ENCODE measurements at regions of chr1 and their contacts with region 1.

Region 1: DNA sequence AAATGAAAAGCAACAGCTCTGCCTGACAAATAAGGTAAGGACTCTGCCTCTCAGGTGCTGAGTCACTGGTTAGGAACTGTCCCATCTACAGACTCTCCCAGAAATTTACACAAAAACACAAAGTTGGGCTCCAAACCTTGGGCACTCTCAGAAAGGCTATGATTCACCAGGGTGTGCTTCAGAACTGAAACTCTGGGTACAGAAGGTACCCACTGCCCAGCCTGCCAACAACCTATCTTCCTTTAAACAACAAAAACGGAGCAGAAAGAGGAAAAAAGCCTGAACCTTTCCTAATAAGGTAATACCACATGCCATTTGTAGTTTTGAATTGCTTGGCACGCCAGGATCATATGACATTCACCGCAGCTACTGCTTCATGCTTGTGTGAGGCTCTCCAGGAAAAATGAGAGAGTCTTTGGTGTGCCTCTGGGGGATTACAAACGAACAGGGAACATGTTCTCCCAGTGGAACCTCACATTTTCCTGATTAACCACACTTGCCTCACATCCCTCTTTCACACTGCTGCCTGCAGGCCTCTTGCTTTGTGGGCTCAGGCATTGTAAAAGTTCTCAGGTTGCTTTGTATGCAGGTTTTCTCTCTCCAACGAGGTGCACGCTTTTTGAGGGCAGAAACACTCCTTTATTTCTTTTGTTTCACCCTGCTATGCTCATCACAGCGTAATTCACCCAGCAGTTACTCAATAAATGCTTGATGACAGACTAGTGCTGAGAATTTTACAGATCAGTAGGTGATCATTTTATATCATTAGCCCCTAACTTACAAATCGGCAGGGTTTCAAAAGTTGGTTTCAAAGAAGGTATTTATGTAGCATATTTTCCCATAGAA is 65.1 kb downstream of the GADD45A start:
- DNase-seq: peak; percentile 80 to 87
- H3K4me3 ChIP-seq: no peak overlapping the region
- CTCF ChIP-seq: no peak
- POLR2A ChIP-seq: no peak

Region 2: GRCh38 chr1:67685067-67685557 is 65.0 kb before region 1 on chr1 and contains the start of gene GADD45A:
- intact Hi-C with region 1: loop called (anchors 10 kb)
- DNase-seq: peak; percentile 99 to 100
- H3K4me3 ChIP-seq: peak within 1 kb of the TSS; percentile 71
- CTCF ChIP-seq: no peak
- POLR2A ChIP-seq: peak in 1 of 2 donors; percentile 92
- total RNA-seq, gene GADD45A: 25.2 to 44.4 (median 29.0) TPM

Region 3: DNA sequence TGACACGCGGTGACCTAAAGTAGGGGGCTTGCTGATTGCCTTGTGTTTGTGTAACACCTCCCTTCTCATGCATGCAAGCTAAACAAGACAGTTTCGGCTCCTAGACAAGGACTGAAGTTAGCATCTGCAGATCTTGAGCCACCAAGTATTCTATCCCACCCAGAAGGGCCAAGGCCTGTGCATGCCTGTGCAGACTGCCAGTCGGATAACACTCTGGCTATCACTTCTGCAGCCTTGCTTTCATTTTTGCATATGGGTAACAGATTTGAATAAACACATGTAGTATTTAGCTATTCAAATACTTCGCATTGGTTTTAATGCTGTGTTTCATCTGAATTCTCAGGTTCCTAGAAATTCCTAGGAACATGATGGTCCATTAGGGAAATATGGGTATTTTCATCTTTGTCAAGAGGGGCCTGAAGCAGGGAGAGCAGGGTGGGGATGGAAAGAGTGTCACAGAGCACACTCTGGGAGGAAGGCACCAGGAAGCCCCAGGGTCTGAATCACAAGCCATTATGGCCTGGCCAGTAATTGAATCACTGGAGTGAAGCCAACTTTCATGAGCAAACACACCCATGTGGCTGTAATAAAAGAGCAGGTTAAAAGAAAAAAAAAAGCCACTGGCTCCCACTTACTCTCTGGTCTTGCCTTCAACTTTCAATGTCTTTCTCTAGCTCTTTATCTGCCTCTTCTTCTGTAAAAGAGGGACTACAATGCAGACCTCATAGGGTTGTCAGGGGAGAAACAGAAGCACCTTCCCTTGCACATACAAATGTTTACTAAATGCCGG is 36.8 kb before region 1 on chr1:
- intact Hi-C with region 1: no loop called
- DNase-seq: no peak
- H3K4me3 ChIP-seq: no peak overlapping the region
- CTCF ChIP-seq: no peak
- POLR2A ChIP-seq: no peak